Activated CD8-positive, alpha-beta T cell treated with anti-CD3 and anti-CD28 coated beads for 36 hours (primary cell): ENCODE measurements at regions of chr19 and their contacts with region 1.

Region 1: DNA sequence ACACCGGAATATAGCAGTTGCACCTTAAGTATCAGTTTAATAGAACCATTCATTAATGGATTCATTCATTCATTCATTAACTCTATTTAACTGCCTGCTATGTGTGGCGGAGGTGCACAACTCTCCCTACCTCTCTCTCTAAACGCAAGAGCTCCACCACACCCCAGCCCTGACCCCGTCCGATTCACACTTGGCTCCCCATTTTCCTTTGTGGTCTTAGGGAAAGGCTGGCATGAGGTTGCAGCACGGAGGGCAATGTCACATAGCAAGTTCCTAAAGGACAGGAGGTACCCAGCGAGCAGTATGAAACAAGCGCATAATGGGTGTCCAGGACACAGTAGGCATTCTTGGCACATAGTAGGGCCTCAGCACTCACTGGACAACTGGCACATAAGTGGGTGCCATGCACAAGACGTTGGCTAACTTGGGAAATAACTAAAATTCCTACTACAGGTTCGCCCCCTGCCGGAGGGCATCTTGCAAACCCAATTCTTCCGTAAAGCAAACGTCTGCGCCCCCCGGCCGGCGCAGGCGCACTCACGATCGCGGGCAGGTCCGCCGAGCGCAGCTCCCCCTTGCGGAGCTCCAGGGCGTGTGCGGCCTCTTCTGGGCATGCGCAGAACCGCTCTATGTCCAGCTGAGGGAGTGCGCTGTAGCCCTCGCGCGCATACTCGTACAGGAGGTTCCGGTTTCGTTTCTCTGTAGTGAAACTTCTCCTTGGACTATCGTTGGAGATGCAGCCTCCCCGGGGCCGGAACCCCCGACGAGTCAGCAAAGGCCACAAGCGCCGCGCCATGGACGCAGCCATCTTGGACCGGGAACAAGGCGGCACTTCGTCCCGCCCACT is at the start of gene SARS2:
- DNase-seq: peak; percentile 92
- ATAC-seq: peak; percentile 80
- H3K4me3 Mint-ChIP-seq: peak within 1 kb of the TSS; percentile 99
- H3K27ac Mint-ChIP-seq: peak within 1 kb of the TSS; percentile 98
- H3K4me1 Mint-ChIP-seq: peaks cover 31% of the 10 kb centered on the region
- H3K27me3 Mint-ChIP-seq: no peaks in the 10 kb centered on the region
- CTCF ChIP-seq: peak; percentile 99
- total RNA-seq, gene SARS2: 43.4 to 48.6 TPM

Region 2: DNA sequence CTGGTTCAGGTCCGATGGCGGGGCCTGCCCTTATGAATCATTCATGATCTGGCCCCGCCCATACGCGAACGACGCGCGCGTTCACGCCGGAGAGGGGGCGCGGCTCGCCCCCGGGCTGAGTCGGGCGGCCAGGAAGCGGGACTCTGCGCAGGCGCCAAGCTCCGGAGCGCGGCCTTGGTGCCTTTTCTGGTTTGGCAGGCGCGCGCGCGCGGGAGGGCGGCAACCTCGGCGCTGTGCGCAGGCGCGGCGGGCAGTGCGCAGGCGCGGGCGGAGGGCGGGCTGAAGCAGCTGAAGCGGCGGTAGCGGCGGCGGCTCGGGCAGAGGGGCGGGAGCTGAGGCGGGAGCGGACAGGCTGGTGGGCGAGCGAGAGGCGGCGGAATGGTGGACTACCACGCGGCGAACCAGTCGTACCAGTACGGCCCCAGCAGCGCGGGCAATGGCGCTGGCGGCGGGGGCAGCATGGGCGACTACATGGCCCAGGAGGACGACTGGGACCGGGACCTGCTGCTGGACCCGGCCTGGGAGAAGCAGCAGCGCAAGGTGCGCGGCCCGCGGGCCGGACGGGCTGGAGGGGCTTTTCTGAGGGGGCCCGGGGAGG is 282.7 kb before region 1 on chr19 and contains the start of gene ACTN4:
- CTCF ChIA-PET with region 1: interaction called, 10 read pairs
- POLR2A ChIA-PET with region 1: no interaction called
- intact Hi-C with region 1: no loop called
- DNase-seq: peak; percentile 99
- ATAC-seq: peak; percentile 95
- H3K4me3 Mint-ChIP-seq: peak within 1 kb of the TSS; percentile 97
- H3K27ac Mint-ChIP-seq: peak within 1 kb of the TSS; percentile 87
- H3K4me1 Mint-ChIP-seq: peaks cover 40% of the 10 kb centered on the region
- H3K27me3 Mint-ChIP-seq: peaks cover 10% of the 10 kb centered on the region
- CTCF ChIP-seq: no peak
- total RNA-seq, gene ACTN4: 183 to 189 TPM

Region 3: GRCh38 chr19:38781058-38781457 is 149.1 kb before region 1 on chr19:
- CTCF ChIA-PET with region 1: no interaction called
- POLR2A ChIA-PET with region 1: no interaction called
- intact Hi-C with region 1: no loop called
- DNase-seq: no peak
- ATAC-seq: no peak
- H3K4me3 Mint-ChIP-seq: no peak overlapping the region
- H3K27ac Mint-ChIP-seq: no peak overlapping the region
- H3K4me1 Mint-ChIP-seq: no peaks in the 10 kb centered on the region
- H3K27me3 Mint-ChIP-seq: no peaks in the 10 kb centered on the region
- CTCF ChIP-seq: no peak

Region 4: DNA sequence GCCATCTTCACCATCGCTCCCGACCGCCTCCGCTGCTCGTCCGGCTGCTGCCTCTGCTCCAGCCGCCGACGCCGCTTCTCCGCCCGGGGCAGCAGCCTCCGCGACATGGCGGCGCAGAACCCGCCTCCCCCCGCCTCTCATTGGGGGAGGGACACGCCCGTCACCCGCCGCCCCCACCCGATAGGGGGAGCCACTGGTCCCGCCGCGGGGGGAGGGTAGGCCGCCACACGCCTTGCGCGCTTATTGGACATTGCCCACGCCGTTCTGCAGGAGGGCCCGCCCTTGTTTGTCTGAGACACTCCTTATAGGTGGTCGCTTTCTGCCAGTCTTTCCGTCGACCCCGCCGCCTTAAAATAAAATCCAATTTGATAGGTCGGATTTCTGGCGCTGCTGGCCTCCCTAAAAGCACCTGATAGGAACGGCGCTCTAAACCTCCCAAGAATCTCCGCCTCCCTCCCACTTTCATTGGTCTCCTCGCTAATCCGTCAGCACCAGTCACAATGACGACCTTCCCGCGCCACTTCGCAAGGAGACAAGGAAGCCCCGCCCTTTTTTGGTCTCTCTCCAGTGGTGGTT is 80.2 kb before region 1 on chr19 and contains the start of gene HNRNPL:
- CTCF ChIA-PET with region 1: interaction called, 7 read pairs
- POLR2A ChIA-PET with region 1: interaction called, 3 read pairs
- intact Hi-C with region 1: loop called (anchors 5 kb)
- DNase-seq: peak; percentile 100
- ATAC-seq: peak; percentile 71
- H3K4me3 Mint-ChIP-seq: peak within 1 kb of the TSS; percentile 97
- H3K27ac Mint-ChIP-seq: peak within 1 kb of the TSS; percentile 99
- H3K4me1 Mint-ChIP-seq: peaks cover 40% of the 10 kb centered on the region
- H3K27me3 Mint-ChIP-seq: no peaks in the 10 kb centered on the region
- CTCF ChIP-seq: no peak
- total RNA-seq, gene HNRNPL: 747 to 761 TPM

Region 5: GRCh38 chr19:38891771-38892170 is 38.4 kb before region 1 on chr19:
- CTCF ChIA-PET with region 1: interaction called, 11 read pairs
- POLR2A ChIA-PET with region 1: interaction called, 3 read pairs
- intact Hi-C with region 1: no loop called
- DNase-seq: no peak
- ATAC-seq: no peak
- H3K4me3 Mint-ChIP-seq: no peak overlapping the region
- H3K27ac Mint-ChIP-seq: no peak overlapping the region
- H3K4me1 Mint-ChIP-seq: peaks cover 5% of the 10 kb centered on the region
- H3K27me3 Mint-ChIP-seq: no peaks in the 10 kb centered on the region
- CTCF ChIP-seq: no peak

Region 6: DNA sequence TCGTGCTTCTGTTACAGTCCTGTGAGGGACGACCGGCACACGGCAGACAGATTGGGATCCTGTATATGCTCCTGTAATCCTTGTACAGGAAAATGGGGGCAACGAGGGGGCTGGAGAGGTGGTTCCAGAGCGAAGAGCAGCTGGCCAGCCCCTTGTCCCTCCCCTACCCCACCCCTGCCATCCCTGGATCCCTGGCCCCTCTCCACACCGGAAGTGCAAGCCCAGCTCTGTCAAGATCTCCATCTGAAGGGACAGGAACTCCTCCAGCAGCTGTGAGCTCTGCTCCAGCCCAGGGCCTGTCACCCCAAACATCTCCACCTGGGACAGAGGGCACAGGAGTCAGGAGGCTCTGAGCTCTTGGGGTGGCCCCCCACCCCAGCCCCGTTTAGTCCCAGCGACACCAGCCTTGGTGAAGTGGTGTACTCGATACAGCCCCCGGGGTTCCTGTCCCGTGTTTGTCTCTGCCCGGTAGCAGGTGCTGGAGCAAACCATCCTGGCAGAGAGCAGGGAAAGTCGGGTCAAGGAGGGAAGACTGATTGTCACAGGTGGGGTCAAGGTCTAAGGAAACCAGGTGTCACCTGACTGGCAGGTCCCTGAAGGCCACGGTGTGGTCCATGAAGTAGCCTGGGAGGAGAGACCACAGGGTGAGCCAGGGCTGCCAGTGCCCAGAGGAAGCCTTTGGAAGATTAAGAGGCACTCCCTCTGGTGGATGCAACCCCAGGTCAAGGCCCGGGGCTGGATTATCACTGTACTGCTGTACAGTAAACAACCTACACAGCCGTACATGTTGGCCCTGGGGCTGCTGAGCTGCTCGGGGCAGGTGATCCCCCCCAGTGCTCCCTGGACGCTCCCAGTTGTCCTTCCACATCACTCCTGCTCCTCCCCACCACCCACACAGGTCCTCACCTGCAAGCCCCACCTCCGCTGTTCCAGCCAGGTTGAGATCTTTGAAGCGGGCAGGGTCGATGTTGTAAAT is 12.3 kb before region 1 on chr19:
- CTCF ChIA-PET with region 1: interaction called, 15 read pairs
- POLR2A ChIA-PET with region 1: no interaction called
- intact Hi-C with region 1: no loop called
- DNase-seq: no peak
- ATAC-seq: no peak
- H3K4me3 Mint-ChIP-seq: no peak overlapping the region
- H3K27ac Mint-ChIP-seq: no peak overlapping the region
- H3K4me1 Mint-ChIP-seq: peaks cover 8% of the 10 kb centered on the region
- H3K27me3 Mint-ChIP-seq: no peaks in the 10 kb centered on the region
- CTCF ChIP-seq: no peak